ENCODE measurements at regions of chr1 and their contacts with region 1.

Region 1: GRCh38 chr1:66350001-66350547 is 183.9 kb upstream of the SGIP1 start:
- DNase-seq: peak in 29 of 42 donors; percentile 13 to 80 (median 58)

Region 2: GRCh38 chr1:64864018-64864940 is 1485.8 kb before region 1 on chr1:
- intact Hi-C with region 1: no loop called
- DNase-seq: peak in 30 of 42 donors; percentile 15 to 62 (median 36)

Region 3: GRCh38 chr1:65924471-65924870 is 425.6 kb before region 1 on chr1:
- intact Hi-C with region 1: no loop called
- DNase-seq: no peak

Region 4: GRCh38 chr1:66012106-66012784 is 337.8 kb before region 1 on chr1:
- intact Hi-C with region 1: no loop called
- DNase-seq: no peak

Region 5: DNA sequence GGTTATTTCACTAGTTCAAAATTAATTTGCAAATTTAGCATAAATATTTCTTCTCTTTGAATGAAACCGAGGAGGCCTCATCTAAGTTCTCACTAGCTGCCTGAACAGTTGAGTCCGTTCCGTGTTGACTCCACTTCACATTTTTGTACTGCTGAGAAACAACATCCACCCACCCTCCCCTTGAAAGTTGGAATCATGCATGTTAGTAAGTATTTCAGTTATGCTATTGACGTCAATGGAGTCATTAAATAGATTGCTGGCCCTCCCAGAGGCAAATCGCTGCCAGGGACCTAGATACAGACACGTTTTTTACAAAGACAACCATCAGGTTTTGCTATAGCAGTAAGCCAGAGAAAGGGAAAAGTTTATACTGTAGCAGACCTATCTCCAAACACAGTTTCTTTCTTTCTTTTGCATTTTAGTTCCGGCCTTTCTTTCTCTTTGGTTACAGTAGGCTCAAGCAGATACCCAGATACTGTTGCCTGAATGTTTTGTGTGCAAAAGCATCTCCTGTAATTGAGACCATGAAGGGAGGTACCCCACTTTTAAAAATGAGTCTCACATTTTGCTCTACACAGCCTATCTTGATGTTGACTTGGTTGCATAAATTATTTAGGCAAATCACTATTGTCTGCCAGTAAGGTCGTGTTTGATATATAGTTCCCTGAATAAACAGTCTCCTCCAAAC is 78.7 kb before region 1 on chr1:
- intact Hi-C with region 1: loop called (anchors 5 kb)
- DNase-seq: peak in 32 of 42 donors; percentile 12 to 82 (median 57)

Measured in head of caudate nucleus (tissue), 42 donors.